Activated B cell treated with CpG ODN at 0.5 μM for 24 hours (primary cell): ENCODE measurements at regions of chr4 and their contacts with region 1.

Region 1: DNA sequence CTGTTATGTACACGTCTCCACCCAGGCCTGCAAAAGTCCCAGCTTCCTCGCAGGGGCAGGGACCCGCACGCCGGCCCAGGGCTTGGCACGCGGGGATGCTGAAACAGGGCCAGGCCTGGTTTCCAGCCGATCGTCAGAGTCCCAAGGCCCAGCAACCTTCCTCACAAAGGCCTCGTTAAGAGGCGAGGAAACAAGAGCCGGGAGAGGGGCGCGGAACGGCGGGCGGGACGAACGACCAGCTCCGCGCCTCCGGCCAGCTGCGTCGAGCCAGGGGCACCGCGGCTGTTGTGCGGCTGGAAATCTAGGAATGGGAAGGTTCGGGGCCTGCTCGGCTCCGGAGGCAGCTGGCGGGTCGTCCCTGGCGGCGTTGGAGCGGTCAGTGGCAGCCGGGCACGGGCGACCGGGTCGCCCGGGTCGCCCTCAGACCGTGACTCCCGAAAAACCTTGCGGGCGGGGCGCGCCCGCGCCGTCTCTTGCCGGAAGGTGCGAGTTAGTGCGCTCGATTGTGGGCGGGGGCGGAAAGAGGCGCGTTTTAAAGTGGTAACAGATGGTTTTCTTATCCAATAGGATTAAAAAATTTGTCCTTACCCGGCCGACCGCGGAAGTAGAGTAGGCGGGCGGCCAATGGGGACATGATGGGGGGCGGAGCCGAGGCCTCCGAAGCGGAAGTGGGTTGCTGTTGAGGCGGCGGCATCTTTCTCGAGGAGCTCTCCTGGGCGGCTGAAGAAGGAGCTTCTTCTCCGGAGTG is at the start of gene RNF4:
- DNase-seq: peak; percentile 83
- ATAC-seq: peak; percentile 87
- H3K4me3 Mint-ChIP-seq: peak within 1 kb of the TSS; percentile 96
- H3K27ac Mint-ChIP-seq: peak within 1 kb of the TSS; percentile 94
- H3K4me1 Mint-ChIP-seq: peaks cover 51% of the 10 kb centered on the region
- H3K27me3 Mint-ChIP-seq: no peaks in the 10 kb centered on the region
- CTCF ChIP-seq: no peak
- total RNA-seq, gene RNF4: 93.5 and 93.6 TPM in 2 replicates

Region 2: DNA sequence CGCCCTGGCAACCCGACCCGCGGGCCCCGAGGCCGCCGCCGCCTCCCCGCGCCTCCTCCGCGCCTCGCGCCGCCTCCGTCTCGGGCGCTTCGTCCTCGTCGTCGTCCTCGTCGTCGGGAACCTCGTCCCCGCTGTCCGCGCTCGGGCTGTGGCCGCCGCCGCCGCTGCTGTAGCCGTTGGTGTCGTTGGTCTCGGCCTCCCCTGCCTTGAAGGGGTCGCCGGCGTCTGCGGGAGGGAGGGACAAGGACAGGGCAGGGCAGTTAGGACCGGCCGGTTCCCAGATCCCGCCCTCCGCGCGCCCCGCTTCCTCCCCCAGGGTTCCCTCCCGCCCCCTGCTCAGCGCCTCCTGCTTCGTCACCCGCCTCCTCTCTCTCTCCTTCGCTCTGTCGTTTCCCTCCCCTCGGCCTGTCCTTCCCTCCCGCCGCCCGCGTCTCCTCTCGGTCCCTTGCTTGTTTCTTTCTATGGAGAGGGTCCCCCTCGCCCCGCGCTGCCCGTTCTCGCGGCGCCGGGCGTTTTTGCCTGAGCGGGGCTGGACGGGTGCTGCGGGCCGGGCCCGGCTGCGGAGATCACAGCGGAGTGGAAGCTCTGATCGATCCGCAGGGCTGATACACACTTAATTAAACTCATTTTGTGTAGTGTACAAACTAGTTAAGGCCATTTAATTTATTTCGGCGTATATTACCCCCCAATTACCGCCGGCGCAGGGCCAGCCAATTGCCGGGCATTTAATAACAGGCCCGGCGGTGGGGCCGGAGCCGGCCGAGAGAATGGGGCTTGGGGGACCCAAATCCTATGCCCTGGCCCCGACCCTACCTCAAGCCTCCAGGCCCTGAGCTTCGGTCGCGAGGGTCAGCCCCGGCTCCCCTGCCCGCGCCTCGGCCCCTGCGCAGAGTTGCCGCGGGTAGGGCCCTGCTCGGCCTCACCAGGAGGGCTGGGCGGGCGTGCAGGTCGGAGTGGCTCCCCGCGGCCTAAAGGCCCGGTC is 1064.7 kb before region 1 on chr4:
- CTCF ChIA-PET with region 1: no interaction called
- POLR2A ChIA-PET with region 1: no interaction called
- intact Hi-C with region 1: no loop called
- DNase-seq: no peak
- ATAC-seq: no peak
- H3K4me3 Mint-ChIP-seq: peak overlapping the region; percentile 11
- H3K27ac Mint-ChIP-seq: no peak overlapping the region
- H3K4me1 Mint-ChIP-seq: peaks cover 6% of the 10 kb centered on the region
- H3K27me3 Mint-ChIP-seq: peaks cover 35% of the 10 kb centered on the region
- CTCF ChIP-seq: no peak

Region 3: GRCh38 chr4:2241410-2242353 is 226.9 kb before region 1 on chr4 and contains the starts of genes HAUS3 and POLN:
- CTCF ChIA-PET with region 1: no interaction called
- POLR2A ChIA-PET with region 1: interaction called, 11 read pairs
- intact Hi-C with region 1: loop called (anchors 1 kb)
- DNase-seq: peak; percentile 99
- ATAC-seq: peak; percentile 96
- H3K4me3 Mint-ChIP-seq: peak within 1 kb of the TSS; percentile 91
- H3K27ac Mint-ChIP-seq: peak within 1 kb of the TSS; percentile 86
- H3K4me1 Mint-ChIP-seq: peaks cover 54% of the 10 kb centered on the region
- H3K27me3 Mint-ChIP-seq: no peaks in the 10 kb centered on the region
- CTCF ChIP-seq: no peak
- total RNA-seq, gene HAUS3: 17.9 and 19.0 TPM in 2 replicates
- total RNA-seq, gene POLN: 1.4 and 1.7 TPM in 2 replicates

Region 4: DNA sequence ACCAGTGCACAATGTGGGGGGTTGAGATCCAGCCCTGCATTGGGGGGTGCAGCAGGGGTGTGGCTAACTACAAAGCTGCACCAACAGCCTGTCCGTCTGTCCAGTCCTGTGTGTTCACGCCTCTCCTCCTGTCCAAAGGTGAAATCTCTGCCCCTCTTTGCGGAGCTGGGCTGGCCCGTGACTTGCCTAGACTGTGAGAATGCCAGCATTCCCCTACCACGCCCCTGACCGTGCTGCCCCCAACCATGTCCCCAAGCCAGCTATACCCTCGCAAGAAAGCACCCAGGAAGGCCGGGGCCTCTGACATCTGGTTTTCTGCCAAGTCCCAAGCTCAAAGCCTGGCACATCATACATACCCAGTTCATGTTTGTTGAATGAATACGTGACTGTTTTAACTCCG is 69.4 kb before region 1 on chr4:
- CTCF ChIA-PET with region 1: no interaction called
- POLR2A ChIA-PET with region 1: no interaction called
- intact Hi-C with region 1: no loop called
- DNase-seq: no peak
- ATAC-seq: no peak
- H3K4me3 Mint-ChIP-seq: no peak overlapping the region
- H3K27ac Mint-ChIP-seq: no peak overlapping the region
- H3K4me1 Mint-ChIP-seq: peaks cover 15% of the 10 kb centered on the region
- H3K27me3 Mint-ChIP-seq: peaks cover 28% of the 10 kb centered on the region
- CTCF ChIP-seq: no peak

Region 5: DNA sequence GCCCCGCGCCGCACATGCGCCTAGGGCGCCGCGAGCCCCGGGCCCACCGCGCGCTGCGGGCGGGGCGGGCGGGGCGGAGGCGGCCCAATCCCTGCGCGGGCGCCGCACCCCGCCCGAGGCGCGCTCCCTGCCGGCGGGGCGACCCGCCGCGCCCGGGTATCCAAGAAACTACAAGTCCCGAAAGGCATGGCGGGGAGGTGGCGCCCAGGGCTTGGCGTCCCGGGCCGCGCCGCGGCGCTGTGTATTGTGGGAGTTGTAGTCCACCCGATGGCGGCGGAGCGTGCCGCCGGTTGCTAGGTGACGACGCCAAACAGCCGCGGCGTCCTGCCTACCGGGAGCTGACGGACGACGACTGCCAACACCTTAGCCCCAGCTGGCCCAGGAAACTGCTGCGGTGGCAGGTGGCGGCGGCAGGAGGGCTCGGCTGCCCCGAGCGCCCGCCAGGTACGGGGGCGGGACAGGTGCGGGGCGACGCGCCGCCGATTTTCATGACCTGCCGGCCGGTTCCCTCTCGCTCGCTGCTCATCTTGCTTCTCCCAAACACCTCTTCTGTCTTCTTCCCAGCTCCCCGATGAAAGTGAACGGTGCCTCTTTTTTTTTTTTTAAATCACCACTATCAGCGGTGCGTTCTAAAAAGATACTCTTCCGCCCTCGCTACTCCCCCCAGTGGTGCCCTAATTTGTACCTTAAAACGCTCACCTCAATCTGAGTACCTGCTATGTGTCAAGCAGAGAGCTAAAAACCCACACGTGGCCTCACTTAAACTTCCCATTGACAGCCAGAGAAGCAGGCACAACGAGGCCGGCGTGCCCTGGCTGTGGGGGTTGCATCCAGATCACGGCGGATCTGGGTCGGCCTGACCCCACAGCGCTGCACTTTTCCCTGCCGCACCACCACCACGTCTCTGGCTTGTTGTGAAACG is 49.7 kb before region 1 on chr4 and contains the start of gene CFAP99:
- CTCF ChIA-PET with region 1: interaction called, 4 read pairs
- POLR2A ChIA-PET with region 1: interaction called, 8 read pairs
- intact Hi-C with region 1: loop called (anchors 1 kb)
- DNase-seq: peak; percentile 93
- ATAC-seq: peak; percentile 91
- H3K4me3 Mint-ChIP-seq: peak within 1 kb of the TSS; percentile 91
- H3K27ac Mint-ChIP-seq: peak within 1 kb of the TSS; percentile 90
- H3K4me1 Mint-ChIP-seq: peaks cover 39% of the 10 kb centered on the region
- H3K27me3 Mint-ChIP-seq: peaks cover 28% of the 10 kb centered on the region
- CTCF ChIP-seq: no peak
- total RNA-seq, gene CFAP99: not detected in 2 replicates

Region 6: DNA sequence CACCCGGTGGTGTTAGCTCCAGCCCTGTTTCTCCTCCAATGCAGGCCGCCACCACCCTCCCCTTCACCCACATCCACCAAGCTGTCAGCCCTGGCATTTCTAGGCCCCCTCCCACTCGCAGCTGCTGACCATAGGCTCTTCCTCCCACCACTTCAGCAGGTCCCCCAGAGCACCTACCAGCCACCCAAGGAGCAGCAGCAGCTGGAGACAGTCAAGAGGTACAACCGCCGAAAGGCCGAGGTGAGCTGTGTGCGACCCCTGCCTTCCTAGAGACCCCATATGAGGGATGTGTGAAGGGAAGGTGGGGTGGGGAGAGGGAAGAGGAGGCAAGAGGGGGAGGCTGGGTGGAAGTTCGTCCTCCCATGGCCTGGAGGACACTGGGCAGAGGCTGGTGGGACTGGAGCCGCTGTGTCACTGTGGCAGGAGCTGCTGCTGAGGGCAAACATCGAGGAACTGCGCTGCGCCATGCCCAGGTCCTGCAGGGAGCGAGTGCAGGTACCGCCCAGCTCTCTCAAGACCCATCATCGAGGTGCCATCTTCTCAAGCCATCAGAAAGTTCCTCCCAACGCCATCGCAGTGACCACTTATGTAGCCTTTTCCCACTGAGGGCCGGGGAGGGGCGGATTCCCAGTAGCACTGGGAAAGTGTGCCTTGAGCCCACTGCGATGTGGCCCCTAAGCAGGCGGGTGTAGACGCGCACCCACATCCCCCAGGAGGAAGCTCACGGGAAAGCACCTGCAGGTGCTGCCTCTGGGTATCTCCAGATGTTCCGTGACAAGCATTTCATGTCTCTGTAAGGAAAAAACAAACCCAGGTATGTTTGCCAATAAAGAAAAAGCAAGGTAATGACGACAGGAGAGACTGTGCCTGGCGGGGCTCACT is 18.9 kb before region 1 on chr4:
- CTCF ChIA-PET with region 1: no interaction called
- POLR2A ChIA-PET with region 1: interaction called, 11 read pairs
- intact Hi-C with region 1: no loop called
- DNase-seq: no peak
- ATAC-seq: no peak
- H3K4me3 Mint-ChIP-seq: no peak overlapping the region
- H3K27ac Mint-ChIP-seq: no peak overlapping the region
- H3K4me1 Mint-ChIP-seq: no peaks in the 10 kb centered on the region
- H3K27me3 Mint-ChIP-seq: peaks cover 1% of the 10 kb centered on the region
- CTCF ChIP-seq: no peak

Region 7: GRCh38 chr4:2497931-2498330 is 29.3 kb after region 1 on chr4:
- CTCF ChIA-PET with region 1: interaction called, 3 read pairs
- POLR2A ChIA-PET with region 1: interaction called, 15 read pairs
- intact Hi-C with region 1: loop called (anchors 1 kb)
- DNase-seq: no peak
- ATAC-seq: peak; percentile 91
- H3K4me3 Mint-ChIP-seq: peak overlapping the region; percentile 55
- H3K27ac Mint-ChIP-seq: peak overlapping the region; percentile 84
- H3K4me1 Mint-ChIP-seq: peaks cover 44% of the 10 kb centered on the region
- H3K27me3 Mint-ChIP-seq: no peaks in the 10 kb centered on the region
- CTCF ChIP-seq: no peak

Region 8: GRCh38 chr4:2934813-2935761 is 466.5 kb after region 1 on chr4:
- CTCF ChIA-PET with region 1: no interaction called
- POLR2A ChIA-PET with region 1: no interaction called
- intact Hi-C with region 1: loop called (anchors 5 kb)
- DNase-seq: peak; percentile 99
- ATAC-seq: peak; percentile 46
- H3K4me3 Mint-ChIP-seq: peak overlapping the region; percentile 83
- H3K27ac Mint-ChIP-seq: peak overlapping the region; percentile 59
- H3K4me1 Mint-ChIP-seq: peaks cover 66% of the 10 kb centered on the region
- H3K27me3 Mint-ChIP-seq: no peaks in the 10 kb centered on the region
- CTCF ChIP-seq: no peak

Region 9: GRCh38 chr4:3047464-3048286 is 579.1 kb after region 1 on chr4:
- CTCF ChIA-PET with region 1: no interaction called
- POLR2A ChIA-PET with region 1: no interaction called
- intact Hi-C with region 1: loop called (anchors 2 kb)
- DNase-seq: peak; percentile 75
- ATAC-seq: peak; percentile 92
- H3K4me3 Mint-ChIP-seq: peak overlapping the region; percentile 47
- H3K27ac Mint-ChIP-seq: peak overlapping the region; percentile 95
- H3K4me1 Mint-ChIP-seq: peaks cover 52% of the 10 kb centered on the region
- H3K27me3 Mint-ChIP-seq: no peaks in the 10 kb centered on the region
- CTCF ChIP-seq: no peak